ENCODE measurements at regions of chr2 and their contacts with region 1.

Region 1: DNA sequence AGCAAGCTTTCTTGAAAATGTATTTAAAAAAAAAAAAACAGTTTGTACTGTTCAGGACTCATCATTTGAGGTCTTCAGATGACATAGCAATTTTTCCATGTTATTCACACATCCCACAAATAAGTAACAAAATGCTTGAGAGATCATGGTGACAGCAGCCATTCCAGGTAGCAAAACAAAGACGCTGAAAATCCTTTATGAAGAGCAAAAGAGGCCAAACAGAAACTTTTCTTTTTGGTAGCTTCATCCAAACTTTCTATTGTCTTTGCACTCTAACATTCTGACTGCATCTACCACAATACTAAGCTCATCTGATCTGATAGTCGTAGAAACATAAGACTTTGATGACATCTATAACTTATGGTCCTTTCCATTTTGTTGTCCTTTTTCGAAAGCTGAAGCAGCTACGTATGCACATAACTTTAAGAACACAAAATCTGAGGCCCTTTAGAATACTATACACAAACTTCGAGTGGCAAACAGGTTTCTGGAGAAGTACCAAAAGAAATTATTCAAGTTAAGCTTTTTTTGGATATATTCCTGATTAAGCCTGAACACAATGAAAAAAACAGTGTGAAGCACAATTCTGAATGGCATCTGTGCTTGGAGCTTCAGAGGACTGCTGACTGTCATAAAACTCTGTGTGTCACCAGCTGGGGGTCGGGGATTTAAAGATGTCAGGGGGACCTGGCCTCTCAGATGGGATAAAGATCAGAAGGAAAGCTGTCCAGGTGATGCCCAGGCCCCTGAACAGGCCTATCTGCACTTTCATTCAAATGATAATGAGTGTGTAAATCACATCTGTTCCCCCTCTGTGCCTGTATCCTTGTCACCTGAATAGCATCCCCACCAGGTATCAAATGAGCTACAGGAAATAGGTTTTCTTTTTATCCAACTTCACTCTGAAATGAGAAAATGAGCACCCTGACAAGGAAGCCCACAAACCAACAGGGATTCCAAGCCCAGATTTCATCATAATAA is 75.8 kb downstream of the ZEB2 start:
- DNase-seq: no peak
- H3K4me3 ChIP-seq: no peak overlapping the region
- H3K27ac ChIP-seq: peak overlapping the region; percentile 1 to 47; a peak in 3 of 4 replicates
- H3K4me1 ChIP-seq: peaks cover 14 to 33% of the 10 kb centered on the region in 2 experiments; a peak in 3 of 4 replicates
- H3K27me3 ChIP-seq: no peaks in the 10 kb centered on the region
- CTCF ChIP-seq: no peak
- EP300 ChIP-seq: no peak
- RAD21 ChIP-seq: no peak

Region 2: GRCh38 chr2:144132357-144132756 is 311.8 kb before region 1 on chr2:
- CTCF ChIA-PET with region 1: no interaction called
- POLR2A ChIA-PET with region 1: no interaction called
- DNase-seq: no peak
- H3K4me3 ChIP-seq: no peak overlapping the region
- H3K27ac ChIP-seq: no peak overlapping the region
- H3K4me1 ChIP-seq: no peaks in the 10 kb centered on the region; a peak in 1 of 4 replicates
- H3K27me3 ChIP-seq: no peaks in the 10 kb centered on the region
- CTCF ChIP-seq: no peak
- EP300 ChIP-seq: no peak
- RAD21 ChIP-seq: no peak

Region 3: GRCh38 chr2:144364944-144365738 is 79.0 kb before region 1 on chr2:
- CTCF ChIA-PET with region 1: no interaction called
- POLR2A ChIA-PET with region 1: no interaction called
- DNase-seq: no peak
- H3K4me3 ChIP-seq: no peak overlapping the region
- H3K27ac ChIP-seq: peak overlapping the region in 1 of 2 experiments; percentile 7; a peak in 1 of 4 replicates
- H3K4me1 ChIP-seq: peaks cover 0 to 20% of the 10 kb centered on the region in 2 experiments; a peak in 1 of 4 replicates
- H3K27me3 ChIP-seq: no peaks in the 10 kb centered on the region
- CTCF ChIP-seq: no peak
- EP300 ChIP-seq: no peak
- RAD21 ChIP-seq: no peak

Region 4: GRCh38 chr2:144456680-144457079 is 12.6 kb after region 1 on chr2:
- CTCF ChIA-PET with region 1: interaction called, 12 read pairs
- POLR2A ChIA-PET with region 1: no interaction called
- DNase-seq: no peak
- H3K4me3 ChIP-seq: no peak overlapping the region
- H3K27ac ChIP-seq: peak overlapping the region; percentile 74 to 99
- H3K4me1 ChIP-seq: peaks cover 50 to 66% of the 10 kb centered on the region in 2 experiments
- H3K27me3 ChIP-seq: no peaks in the 10 kb centered on the region
- CTCF ChIP-seq: no peak
- EP300 ChIP-seq: no peak
- RAD21 ChIP-seq: no peak